Mammary epithelial cell (primary cell): ENCODE measurements at regions of chr12 and their contacts with region 1.

Region 1: DNA sequence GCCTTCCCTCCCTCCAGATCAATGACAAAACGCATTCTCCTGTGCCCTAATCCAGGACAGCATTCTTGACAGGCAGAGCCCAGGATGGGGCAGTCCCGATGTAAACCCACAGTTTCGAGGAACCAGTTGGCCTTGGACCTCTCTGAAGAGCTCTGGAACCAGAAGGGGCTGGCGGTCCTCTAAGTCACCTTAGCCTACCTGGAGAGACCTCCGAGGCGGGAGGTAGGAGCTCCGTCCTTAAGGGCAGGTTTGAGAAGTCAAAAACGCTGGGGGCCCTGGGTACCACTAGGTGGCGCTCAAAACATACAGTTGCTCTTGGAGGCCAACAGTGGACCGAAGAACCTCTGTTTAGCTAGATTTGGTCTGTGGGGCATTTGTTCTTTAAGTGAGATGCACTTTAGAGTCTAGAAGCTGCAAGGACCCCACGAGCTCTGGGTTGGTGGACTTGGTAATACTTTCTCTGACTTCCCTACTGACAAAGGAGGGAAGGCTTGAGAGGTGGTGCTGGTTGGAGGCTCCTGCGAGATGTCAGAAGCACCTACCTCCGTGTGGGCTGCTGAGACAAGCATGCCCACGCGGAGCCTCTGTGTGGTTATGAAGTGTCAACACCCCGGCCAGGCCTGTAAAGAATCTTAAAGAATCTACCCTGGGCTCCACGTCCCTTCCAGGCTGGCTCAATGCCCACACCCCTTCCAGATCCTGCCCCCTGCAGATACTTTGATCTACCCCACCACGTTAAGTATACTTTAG is 74.8 kb upstream of the CHST11 start:
- DNase-seq: peak; percentile 62
- H3K4me3 ChIP-seq: no peak overlapping the region
- H3K27ac ChIP-seq: no peak overlapping the region
- H3K4me1 ChIP-seq: no peaks in the 10 kb centered on the region
- H3K27me3 ChIP-seq: no peaks in the 10 kb centered on the region
- CTCF ChIP-seq: peak; percentile 93 to 98

Region 2: GRCh38 chr12:104733717-104734175 is 351.8 kb after region 1 on chr12:
- CTCF ChIA-PET with region 1: no interaction called
- dilution Hi-C with region 1: no loop called
- in situ Hi-C with region 1: no loop called
- intact Hi-C with region 1: loop called (anchors 10 kb)
- DNase-seq: no peak
- H3K4me3 ChIP-seq: no peak overlapping the region
- H3K27ac ChIP-seq: no peak overlapping the region
- H3K4me1 ChIP-seq: peaks cover 8% of the 10 kb centered on the region
- H3K27me3 ChIP-seq: no peaks in the 10 kb centered on the region
- CTCF ChIP-seq: peak in 1 of 2 donors; percentile 38

Region 3: DNA sequence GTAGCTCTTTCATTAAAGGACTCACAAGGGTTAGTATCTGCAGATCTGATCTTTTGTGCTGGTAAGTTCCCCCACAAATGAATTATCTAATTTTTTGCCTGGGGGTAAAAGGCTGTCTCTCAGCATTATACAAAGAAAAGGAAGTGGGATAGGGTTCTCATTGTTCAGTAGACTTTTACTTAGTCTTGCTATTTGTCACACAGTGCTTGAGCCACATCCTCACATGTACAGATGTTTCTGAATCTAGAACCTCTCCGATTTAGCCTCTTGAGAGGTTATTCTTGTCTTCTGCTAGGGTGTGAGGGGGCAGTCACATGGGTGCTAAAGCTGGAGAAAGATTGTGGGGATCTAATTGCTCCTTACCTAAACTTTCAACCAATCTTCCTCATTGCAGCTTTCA is 483.2 kb after region 1 on chr12:
- CTCF ChIA-PET with region 1: no interaction called
- dilution Hi-C with region 1: no loop called
- in situ Hi-C with region 1: loop called (anchors 10 to 25 kb)
- intact Hi-C with region 1: no loop called
- DNase-seq: peak; percentile 7
- H3K4me3 ChIP-seq: no peak overlapping the region
- H3K27ac ChIP-seq: no peak overlapping the region
- H3K4me1 ChIP-seq: peaks cover 6% of the 10 kb centered on the region
- H3K27me3 ChIP-seq: no peaks in the 10 kb centered on the region
- CTCF ChIP-seq: no peak

Region 4: DNA sequence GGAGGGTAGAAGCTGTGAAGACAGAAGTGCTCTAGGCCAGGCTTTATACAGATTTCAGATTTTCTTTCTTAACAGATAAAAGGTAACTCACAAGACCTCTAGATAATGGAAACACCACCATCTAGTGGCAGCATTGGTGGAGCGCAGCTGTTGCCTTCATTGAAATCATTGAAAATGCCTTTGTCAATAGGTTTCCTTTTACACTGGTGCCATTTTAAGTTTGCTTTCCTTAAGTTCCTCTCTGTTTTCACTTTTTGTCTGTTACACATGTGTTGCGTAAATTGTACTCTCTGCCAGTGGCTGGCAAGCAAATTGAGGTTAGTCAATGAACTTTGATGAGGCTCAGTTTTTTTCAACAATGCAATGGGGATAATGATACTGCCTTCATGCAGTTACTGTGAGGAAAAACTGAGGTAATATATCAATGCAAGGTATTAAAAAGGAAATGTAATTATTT is 671.2 kb after region 1 on chr12:
- CTCF ChIA-PET with region 1: no interaction called
- dilution Hi-C with region 1: no loop called
- in situ Hi-C with region 1: no loop called
- intact Hi-C with region 1: loop called (anchors 2 kb)
- DNase-seq: peak; percentile 61
- H3K4me3 ChIP-seq: no peak overlapping the region
- H3K27ac ChIP-seq: no peak overlapping the region
- H3K4me1 ChIP-seq: no peaks in the 10 kb centered on the region
- H3K27me3 ChIP-seq: no peaks in the 10 kb centered on the region
- CTCF ChIP-seq: peak; percentile 88 to 97